ENCODE measurements at regions of chr1 and their contacts with region 1.

Region 1: GRCh38 chr1:185170291-185170848 is 13.4 kb downstream of the SWT1 start:
- DNase-seq: no peak
- H3K4me3 ChIP-seq: no peak overlapping the region
- CTCF ChIP-seq: peak; percentile 63

Region 2: DNA sequence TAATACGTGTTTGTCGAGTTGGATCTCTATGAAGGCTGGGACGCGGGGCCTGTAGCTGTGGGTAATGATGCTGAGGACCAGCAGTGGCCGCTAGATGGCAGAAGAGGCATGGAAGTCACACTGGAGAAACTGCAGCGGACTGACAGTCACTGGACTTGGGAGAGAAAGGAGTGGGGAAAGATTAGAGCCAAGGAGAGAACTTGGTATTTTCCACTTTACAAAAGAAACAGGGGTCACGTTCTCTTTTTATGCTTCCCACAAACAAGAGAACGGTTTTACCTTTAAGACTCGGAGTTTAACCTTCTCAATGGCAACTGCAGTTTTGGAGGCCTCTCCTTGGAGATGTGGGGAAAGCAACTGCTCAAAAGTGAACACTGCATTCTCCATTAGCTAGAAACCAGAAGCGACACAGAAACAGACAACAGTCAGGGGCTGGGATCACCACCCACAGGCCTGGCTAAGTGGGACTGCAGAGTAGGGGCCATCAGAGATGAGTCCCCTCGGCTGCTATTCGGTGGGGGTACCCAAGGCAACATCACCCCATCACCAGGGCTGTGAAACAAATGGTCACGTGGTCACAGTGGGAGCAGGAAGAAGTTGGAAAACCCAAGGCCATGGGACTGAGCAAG is 364.6 kb before region 1 on chr1:
- CTCF ChIA-PET with region 1: interaction called, 60 read pairs
- POLR2A ChIA-PET with region 1: no interaction called
- DNase-seq: peak; percentile 36
- H3K4me3 ChIP-seq: no peak overlapping the region
- CTCF ChIP-seq: peak; percentile 93

Region 3: GRCh38 chr1:184992271-184992670 is 178.1 kb before region 1 on chr1:
- CTCF ChIA-PET with region 1: interaction called, 173 read pairs
- POLR2A ChIA-PET with region 1: no interaction called
- DNase-seq: no peak
- H3K4me3 ChIP-seq: no peak overlapping the region
- CTCF ChIP-seq: no peak

Region 4: GRCh38 chr1:185156854-185157598 is 13.3 kb before region 1 on chr1 and contains the starts of genes SWT1 and TRMT1L:
- CTCF ChIA-PET with region 1: interaction called, 55 read pairs
- POLR2A ChIA-PET with region 1: interaction called, 3 read pairs
- DNase-seq: peak; percentile 94
- H3K4me3 ChIP-seq: peak within 1 kb of the TSS; percentile 89
- CTCF ChIP-seq: no peak

Region 5: GRCh38 chr1:185681034-185681633 is 510.8 kb after region 1 on chr1:
- CTCF ChIA-PET with region 1: interaction called, 19 read pairs
- POLR2A ChIA-PET with region 1: no interaction called
- DNase-seq: no peak
- H3K4me3 ChIP-seq: no peak overlapping the region
- CTCF ChIP-seq: peak; percentile 49